ENCODE measurements at regions of chr15 and their contacts with region 1.

Region 1: DNA sequence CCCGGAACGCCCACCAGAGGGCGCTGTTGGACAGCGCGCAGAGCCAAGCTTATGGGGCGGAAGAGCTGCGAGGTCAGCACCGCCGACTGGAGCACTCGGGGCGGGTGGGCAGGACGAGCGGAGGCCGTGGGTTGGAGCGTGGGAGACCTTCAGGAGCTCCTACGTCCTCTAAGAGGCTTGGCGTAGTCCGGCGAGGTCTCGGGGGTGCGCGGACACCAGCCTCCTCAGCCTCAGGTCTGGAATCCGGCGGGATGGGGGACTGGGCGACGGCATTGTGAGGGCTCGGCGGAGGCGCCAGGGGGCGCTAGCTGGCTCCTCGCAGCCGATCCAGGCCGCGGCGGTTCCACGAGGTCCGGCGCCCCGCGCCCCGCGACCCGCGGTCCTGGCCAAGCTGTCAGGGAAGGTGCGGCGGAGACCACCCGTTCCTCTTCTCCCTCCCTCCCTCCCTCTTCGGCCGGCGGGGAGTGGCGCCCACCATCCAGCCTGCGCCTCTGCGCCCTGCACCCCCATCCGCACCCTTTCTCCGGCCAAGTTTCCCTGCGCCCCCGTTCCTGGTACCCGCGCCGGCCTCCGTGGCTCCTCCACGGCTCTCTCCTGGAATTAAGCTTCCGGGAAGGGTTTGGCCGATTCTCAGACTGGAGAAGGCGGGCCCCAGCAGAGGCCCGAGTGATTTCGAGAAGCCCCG is 24.3 kb upstream of the POLG start:
- DNase-seq: peak; percentile 65 to 84 (median 77)
- H3K4me3 ChIP-seq: peak overlapping the region; percentile 45
- H3K4me3 Mint-ChIP-seq: peak overlapping the region; percentile 70 to 89 (median 83)
- H3K27ac ChIP-seq: no peak overlapping the region
- H3K27ac Mint-ChIP-seq: peak overlapping the region in 2 of 8 donors; percentile 19 to 46
- H3K4me1 ChIP-seq: peaks cover 15% of the 10 kb centered on the region
- H3K4me1 Mint-ChIP-seq: peaks cover 10 to 35% (median 16%) of the 10 kb centered on the region in 3 donors
- H3K27me3 ChIP-seq: peaks cover 64% of the 10 kb centered on the region
- H3K27me3 Mint-ChIP-seq: peaks cover 74 to 79% of the 10 kb centered on the region in 2 donors

Region 2: DNA sequence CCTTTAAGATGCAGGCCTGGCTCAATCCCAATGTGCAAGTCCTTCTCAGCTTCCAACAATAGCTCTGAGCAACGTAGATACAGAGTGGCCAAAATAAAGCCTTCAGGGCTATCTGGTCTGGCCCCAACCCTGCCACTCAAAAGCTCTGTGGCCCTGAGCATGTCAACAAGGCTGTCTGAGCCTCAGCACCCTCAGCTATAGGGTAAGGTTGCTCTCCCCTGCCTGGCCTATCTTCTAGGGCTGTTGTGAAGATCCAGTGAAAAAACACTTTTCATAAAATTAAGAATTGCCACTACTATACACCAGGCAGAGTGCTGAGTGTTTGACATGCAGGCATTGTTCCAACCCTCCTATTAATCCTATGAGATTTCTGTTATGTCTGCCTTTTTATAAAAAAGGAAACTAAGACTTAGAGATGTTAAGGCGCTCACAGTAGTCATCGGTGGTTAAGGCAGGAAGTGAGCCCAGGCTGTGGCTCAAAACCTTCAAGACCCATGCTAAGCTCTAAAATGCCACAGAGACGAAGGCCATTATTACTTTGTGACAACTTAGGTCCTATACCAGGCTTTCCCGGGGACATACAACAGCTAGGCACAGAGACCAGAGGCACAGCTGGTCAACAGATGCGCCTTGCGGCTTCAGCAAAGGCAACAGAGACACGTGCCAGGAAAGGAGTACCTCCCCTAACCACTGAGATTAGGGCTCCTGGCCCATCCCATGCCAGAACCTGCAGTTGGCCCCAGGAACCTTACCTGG is 29.4 kb before region 1 on chr15:
- CTCF ChIA-PET with region 1: interaction called, 58 read pairs
- POLR2A ChIA-PET with region 1: no interaction called
- DNase-seq: peak in 3 of 5 donors; percentile 35 to 63 (median 36)
- H3K4me3 ChIP-seq: peak overlapping the region; percentile 33
- H3K4me3 Mint-ChIP-seq: peak overlapping the region; percentile 45 to 90 (median 69)
- H3K27ac ChIP-seq: no peak overlapping the region
- H3K27ac Mint-ChIP-seq: peak overlapping the region; percentile 63 to 94 (median 83)
- H3K4me1 ChIP-seq: peaks cover 60% of the 10 kb centered on the region
- H3K4me1 Mint-ChIP-seq: peaks cover 51 to 66% (median 59%) of the 10 kb centered on the region in 3 donors
- H3K27me3 ChIP-seq: no peaks in the 10 kb centered on the region
- H3K27me3 Mint-ChIP-seq: peaks cover 0 to 2% of the 10 kb centered on the region in 2 donors

Region 3: GRCh38 chr15:89342840-89343239 is 16.1 kb before region 1 on chr15:
- CTCF ChIA-PET with region 1: interaction called, 58 read pairs
- POLR2A ChIA-PET with region 1: no interaction called
- DNase-seq: peak in 1 of 5 donors; percentile 18
- H3K4me3 ChIP-seq: no peak overlapping the region
- H3K4me3 Mint-ChIP-seq: no peak overlapping the region
- H3K27ac ChIP-seq: no peak overlapping the region
- H3K27ac Mint-ChIP-seq: no peak overlapping the region
- H3K4me1 ChIP-seq: no peaks in the 10 kb centered on the region
- H3K4me1 Mint-ChIP-seq: peaks cover 0 to 1% (median 0%) of the 10 kb centered on the region in 3 donors
- H3K27me3 ChIP-seq: peaks cover 7% of the 10 kb centered on the region
- H3K27me3 Mint-ChIP-seq: peaks cover 4 to 11% of the 10 kb centered on the region in 2 donors

Region 4: GRCh38 chr15:89383365-89384175 is 24.7 kb after region 1 on chr15:
- CTCF ChIA-PET with region 1: interaction called, 32 read pairs
- POLR2A ChIA-PET with region 1: no interaction called
- DNase-seq: no peak
- H3K4me3 ChIP-seq: no peak overlapping the region
- H3K4me3 Mint-ChIP-seq: no peak overlapping the region
- H3K27ac ChIP-seq: no peak overlapping the region
- H3K27ac Mint-ChIP-seq: peak overlapping the region in 1 of 8 donors; percentile 32
- H3K4me1 ChIP-seq: no peaks in the 10 kb centered on the region
- H3K4me1 Mint-ChIP-seq: peaks cover 4 to 32% (median 10%) of the 10 kb centered on the region in 3 donors
- H3K27me3 ChIP-seq: peaks cover 3% of the 10 kb centered on the region
- H3K27me3 Mint-ChIP-seq: peaks cover 18 to 22% of the 10 kb centered on the region in 2 donors

Region 5: GRCh38 chr15:89416141-89416853 is 57.4 kb after region 1 on chr15:
- CTCF ChIA-PET with region 1: interaction called, 29 read pairs
- POLR2A ChIA-PET with region 1: no interaction called
- DNase-seq: peak; percentile 46 to 74 (median 55)
- H3K4me3 ChIP-seq: no peak overlapping the region
- H3K4me3 Mint-ChIP-seq: peak overlapping the region in 2 of 7 donors; percentile 31 to 39
- H3K27ac ChIP-seq: no peak overlapping the region
- H3K27ac Mint-ChIP-seq: peak overlapping the region in 1 of 8 donors; percentile 31
- H3K4me1 ChIP-seq: peaks cover 10% of the 10 kb centered on the region
- H3K4me1 Mint-ChIP-seq: peaks cover 11 to 14% (median 14%) of the 10 kb centered on the region in 3 donors
- H3K27me3 ChIP-seq: peaks cover 49% of the 10 kb centered on the region
- H3K27me3 Mint-ChIP-seq: peaks cover 70 to 84% of the 10 kb centered on the region in 2 donors

Region 6: GRCh38 chr15:89430530-89431341 is 71.8 kb after region 1 on chr15:
- CTCF ChIA-PET with region 1: interaction called, 82 read pairs
- POLR2A ChIA-PET with region 1: interaction called, 3 read pairs
- DNase-seq: peak; percentile 68 to 85 (median 77)
- H3K4me3 ChIP-seq: peak overlapping the region; percentile 50
- H3K4me3 Mint-ChIP-seq: peak overlapping the region in 6 of 7 donors; percentile 72 to 89 (median 78)
- H3K27ac ChIP-seq: no peak overlapping the region
- H3K27ac Mint-ChIP-seq: no peak overlapping the region
- H3K4me1 ChIP-seq: no peaks in the 10 kb centered on the region
- H3K4me1 Mint-ChIP-seq: peaks cover 6 to 8% (median 6%) of the 10 kb centered on the region in 3 donors
- H3K27me3 ChIP-seq: no peaks in the 10 kb centered on the region
- H3K27me3 Mint-ChIP-seq: peaks cover 26 to 43% of the 10 kb centered on the region in 2 donors

Region 7: GRCh38 chr15:89812011-89812835 is 453.3 kb after region 1 on chr15:
- CTCF ChIA-PET with region 1: no interaction called
- POLR2A ChIA-PET with region 1: no interaction called
- DNase-seq: no peak
- H3K4me3 ChIP-seq: no peak overlapping the region
- H3K4me3 Mint-ChIP-seq: no peak overlapping the region
- H3K27ac ChIP-seq: no peak overlapping the region
- H3K27ac Mint-ChIP-seq: peak overlapping the region in 1 of 8 donors; percentile 37
- H3K4me1 ChIP-seq: no peaks in the 10 kb centered on the region
- H3K4me1 Mint-ChIP-seq: peaks cover 3 to 11% (median 8%) of the 10 kb centered on the region in 3 donors
- H3K27me3 ChIP-seq: peaks cover 16% of the 10 kb centered on the region
- H3K27me3 Mint-ChIP-seq: peaks cover 38 to 49% of the 10 kb centered on the region in 2 donors